Endothelial cell of umbilical vein (primary cell): ENCODE measurements at regions of chr4 and their contacts with region 1.

Region 1: GRCh38 chr4:96431094-96431493 is 591.2 kb downstream of the PDHA2 start:
- DNase-seq: no peak
- H3K4me3 ChIP-seq: no peak overlapping the region
- H3K27ac ChIP-seq: no peak overlapping the region
- H3K4me1 ChIP-seq: no peaks in the 10 kb centered on the region
- H3K27me3 ChIP-seq: no peaks in the 10 kb centered on the region
- CTCF ChIP-seq: no peak
- POLR2A ChIP-seq: no peak

Region 2: DNA sequence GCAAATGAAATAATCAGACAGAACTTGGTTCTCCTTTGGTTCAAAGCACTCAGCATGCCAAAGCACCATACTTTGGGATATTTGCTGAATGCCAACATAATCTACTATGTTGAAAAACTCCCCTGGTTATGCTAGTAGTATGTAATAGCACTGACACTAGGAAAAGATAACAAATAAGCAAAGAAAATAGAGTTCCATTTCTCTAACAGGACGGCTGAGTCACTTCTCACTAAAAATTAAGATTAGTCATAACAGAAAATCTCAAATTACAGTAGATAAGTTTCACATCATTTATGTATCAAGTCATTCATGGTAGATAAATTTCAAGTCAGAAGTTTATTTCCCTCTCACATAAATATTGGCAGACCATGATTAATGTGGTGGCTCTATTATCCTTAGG is 573.3 kb before region 1 on chr4:
- CTCF ChIA-PET with region 1: no interaction called
- POLR2A ChIA-PET with region 1: no interaction called
- dilution Hi-C with region 1: no loop called
- intact Hi-C with region 1: no loop called
- DNase-seq: no peak
- H3K4me3 ChIP-seq: no peak overlapping the region
- H3K27ac ChIP-seq: no peak overlapping the region
- H3K4me1 ChIP-seq: no peaks in the 10 kb centered on the region
- H3K27me3 ChIP-seq: no peaks in the 10 kb centered on the region
- CTCF ChIP-seq: no peak
- POLR2A ChIP-seq: no peak

Region 3: GRCh38 chr4:96504386-96504785 is 73.3 kb after region 1 on chr4:
- CTCF ChIA-PET with region 1: no interaction called
- POLR2A ChIA-PET with region 1: no interaction called
- dilution Hi-C with region 1: no loop called
- intact Hi-C with region 1: no loop called
- DNase-seq: no peak
- H3K4me3 ChIP-seq: no peak overlapping the region
- H3K27ac ChIP-seq: no peak overlapping the region
- H3K4me1 ChIP-seq: no peaks in the 10 kb centered on the region
- H3K27me3 ChIP-seq: no peaks in the 10 kb centered on the region
- CTCF ChIP-seq: no peak
- POLR2A ChIP-seq: no peak

Region 4: GRCh38 chr4:97123573-97123972 is 692.5 kb after region 1 on chr4:
- CTCF ChIA-PET with region 1: no interaction called
- POLR2A ChIA-PET with region 1: no interaction called
- dilution Hi-C with region 1: no loop called
- intact Hi-C with region 1: loop called (anchors 5 kb)
- DNase-seq: no peak
- H3K4me3 ChIP-seq: no peak overlapping the region
- H3K27ac ChIP-seq: no peak overlapping the region
- H3K4me1 ChIP-seq: no peaks in the 10 kb centered on the region
- H3K27me3 ChIP-seq: no peaks in the 10 kb centered on the region
- CTCF ChIP-seq: no peak
- POLR2A ChIP-seq: no peak